ENCODE measurements at regions of chr3 and their contacts with region 1.

Region 1: DNA sequence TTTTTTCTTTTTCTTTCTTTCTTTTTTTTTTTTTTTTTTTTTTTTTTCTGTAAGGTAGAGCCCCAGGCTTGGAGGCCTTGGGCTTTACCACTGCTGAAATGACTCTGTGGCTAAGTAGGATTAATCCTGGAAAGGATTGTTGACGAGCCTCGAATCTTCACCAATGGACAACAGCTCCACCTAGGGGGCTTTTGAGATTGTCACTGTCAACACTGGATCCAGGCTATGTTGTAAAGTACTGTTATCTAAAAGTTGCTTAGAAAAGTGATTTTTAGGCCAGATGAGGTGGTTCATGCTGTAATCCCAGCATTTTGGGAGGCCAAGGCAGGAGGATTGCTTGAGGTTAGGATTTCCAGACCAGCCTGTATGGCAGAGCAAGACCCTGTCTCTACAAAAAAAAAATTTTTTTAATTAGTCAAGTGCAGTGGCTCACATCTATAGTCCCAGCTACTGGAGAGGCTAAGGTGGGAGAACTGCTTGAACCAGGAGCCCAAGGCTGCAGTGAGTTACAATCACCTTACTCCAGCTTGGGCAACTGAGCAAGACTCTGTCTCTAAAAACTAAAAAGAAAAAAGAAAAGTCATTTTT is 41.6 kb downstream of the KLHL18 start:
- DNase-seq: peak; percentile 67
- ATAC-seq: peak; percentile 71
- H3K4me3 ChIP-seq: no peak overlapping the region
- H3K4me3 Mint-ChIP-seq: no peak overlapping the region
- H3K27ac ChIP-seq: peak overlapping the region in 1 of 2 donors; percentile 31
- H3K27ac Mint-ChIP-seq: no peak overlapping the region
- H3K4me1 ChIP-seq: no peaks in the 10 kb centered on the region
- H3K4me1 Mint-ChIP-seq: peaks cover 5% of the 10 kb centered on the region
- H3K27me3 ChIP-seq: no peaks in the 10 kb centered on the region
- H3K27me3 Mint-ChIP-seq: no peaks in the 10 kb centered on the region
- CTCF ChIP-seq: peak; percentile 91

Region 2: DNA sequence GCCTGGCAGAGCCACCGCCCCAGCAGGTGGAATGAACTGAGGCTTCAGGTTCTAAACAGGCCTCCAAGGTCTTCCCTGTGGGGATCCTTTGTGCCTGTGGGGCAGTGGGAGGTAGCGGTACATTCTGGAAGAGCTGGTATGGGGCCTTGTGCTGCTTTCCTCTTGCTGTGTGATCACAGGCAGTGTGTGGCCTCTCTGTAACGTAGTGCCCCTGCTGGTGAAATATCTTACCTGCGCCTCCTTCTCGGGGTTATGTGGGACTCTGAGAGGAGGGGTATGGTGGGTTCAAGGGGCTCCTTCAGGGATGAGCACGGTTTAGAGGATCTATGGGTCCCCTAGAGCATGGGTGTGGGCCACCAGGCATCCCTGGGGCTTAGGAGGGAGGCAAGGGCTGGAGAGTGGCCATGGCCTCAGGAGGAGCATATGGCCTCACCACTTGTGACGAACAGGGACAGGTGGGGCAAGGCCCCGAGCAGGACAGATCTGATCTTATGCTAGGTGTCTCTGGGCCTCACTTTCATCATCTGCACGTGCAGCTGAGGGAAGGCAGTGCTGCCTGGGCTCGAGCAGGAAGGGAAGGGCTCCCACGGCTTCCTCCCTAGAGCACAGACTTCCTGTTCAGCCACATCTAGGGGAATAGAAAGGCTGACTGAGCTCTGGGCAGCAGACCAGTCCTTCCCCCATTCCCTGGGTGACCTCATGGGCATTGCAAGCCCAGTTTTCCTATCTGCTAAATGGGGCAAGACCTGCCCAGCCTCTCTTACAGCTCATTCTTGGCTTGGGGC is 629.0 kb before region 1 on chr3:
- CTCF ChIA-PET with region 1: no interaction called
- POLR2A ChIA-PET with region 1: no interaction called
- intact Hi-C with region 1: no loop called
- DNase-seq: peak; percentile 49
- ATAC-seq: no peak
- H3K4me3 ChIP-seq: no peak overlapping the region
- H3K4me3 Mint-ChIP-seq: peak overlapping the region; percentile 56
- H3K27ac ChIP-seq: no peak overlapping the region
- H3K27ac Mint-ChIP-seq: peak overlapping the region; percentile 7
- H3K4me1 ChIP-seq: peaks cover 33 to 38% of the 10 kb centered on the region in 2 donors
- H3K4me1 Mint-ChIP-seq: peaks cover 28% of the 10 kb centered on the region
- H3K27me3 ChIP-seq: peaks cover 0 to 35% (median 8%) of the 10 kb centered on the region in 4 experiments
- H3K27me3 Mint-ChIP-seq: peaks cover 9% of the 10 kb centered on the region
- CTCF ChIP-seq: peak; percentile 43

Region 3: DNA sequence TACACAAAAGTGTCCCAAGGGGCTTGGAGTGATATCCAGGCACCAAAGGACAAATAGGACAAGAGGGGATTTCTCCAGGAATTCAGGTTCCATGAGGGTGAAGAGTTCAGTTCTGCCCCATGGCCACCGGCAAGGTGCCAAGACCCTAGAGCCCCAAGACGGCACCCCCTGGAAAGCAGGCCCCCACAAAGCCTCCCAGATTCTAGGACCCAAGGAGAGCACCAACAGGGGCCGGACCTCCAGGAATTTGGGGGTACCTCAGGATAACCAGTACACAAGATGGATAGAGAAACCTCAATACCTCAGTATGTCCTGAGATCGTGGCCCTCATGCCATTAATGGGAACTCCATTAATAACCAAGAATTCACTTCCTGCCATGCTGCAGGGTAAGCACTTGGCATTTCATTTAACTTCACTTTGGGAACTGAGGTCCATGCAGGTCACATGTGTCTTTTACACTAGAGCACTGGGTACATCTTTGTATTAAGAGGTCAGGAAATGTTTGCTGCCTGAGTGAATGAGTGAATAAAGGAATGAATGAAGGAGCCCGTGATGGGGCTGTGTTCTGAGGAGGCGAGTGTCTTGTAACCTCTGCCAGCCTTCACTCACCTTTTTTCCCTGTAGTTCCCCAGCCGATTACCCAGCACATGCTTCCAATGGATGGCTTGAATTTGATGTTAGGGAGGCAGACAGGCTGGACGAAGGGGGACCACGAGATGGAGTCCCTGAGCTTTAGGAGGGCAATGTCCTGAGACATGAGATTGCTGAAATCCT is 591.2 kb before region 1 on chr3:
- CTCF ChIA-PET with region 1: no interaction called
- POLR2A ChIA-PET with region 1: no interaction called
- intact Hi-C with region 1: no loop called
- DNase-seq: no peak
- ATAC-seq: no peak
- H3K4me3 ChIP-seq: no peak overlapping the region
- H3K4me3 Mint-ChIP-seq: no peak overlapping the region
- H3K27ac ChIP-seq: no peak overlapping the region
- H3K27ac Mint-ChIP-seq: no peak overlapping the region
- H3K4me1 ChIP-seq: no peaks in the 10 kb centered on the region
- H3K4me1 Mint-ChIP-seq: no peaks in the 10 kb centered on the region
- H3K27me3 ChIP-seq: peaks cover 0 to 3% (median 2%) of the 10 kb centered on the region in 4 experiments
- H3K27me3 Mint-ChIP-seq: peaks cover 16% of the 10 kb centered on the region
- CTCF ChIP-seq: no peak

Region 4: GRCh38 chr3:46923559-46924350 is 400.6 kb before region 1 on chr3:
- CTCF ChIA-PET with region 1: interaction called, 13 read pairs
- POLR2A ChIA-PET with region 1: no interaction called
- intact Hi-C with region 1: loop called (anchors 10 kb)
- DNase-seq: peak; percentile 66
- ATAC-seq: no peak
- H3K4me3 ChIP-seq: no peak overlapping the region
- H3K4me3 Mint-ChIP-seq: peak overlapping the region; percentile 21
- H3K27ac ChIP-seq: peak overlapping the region; percentile 85 to 92
- H3K27ac Mint-ChIP-seq: peak overlapping the region; percentile 83
- H3K4me1 ChIP-seq: peaks cover 57 to 59% of the 10 kb centered on the region in 2 donors
- H3K4me1 Mint-ChIP-seq: peaks cover 60% of the 10 kb centered on the region
- H3K27me3 ChIP-seq: no peaks in the 10 kb centered on the region
- H3K27me3 Mint-ChIP-seq: no peaks in the 10 kb centered on the region
- CTCF ChIP-seq: peak; percentile 70

Region 5: DNA sequence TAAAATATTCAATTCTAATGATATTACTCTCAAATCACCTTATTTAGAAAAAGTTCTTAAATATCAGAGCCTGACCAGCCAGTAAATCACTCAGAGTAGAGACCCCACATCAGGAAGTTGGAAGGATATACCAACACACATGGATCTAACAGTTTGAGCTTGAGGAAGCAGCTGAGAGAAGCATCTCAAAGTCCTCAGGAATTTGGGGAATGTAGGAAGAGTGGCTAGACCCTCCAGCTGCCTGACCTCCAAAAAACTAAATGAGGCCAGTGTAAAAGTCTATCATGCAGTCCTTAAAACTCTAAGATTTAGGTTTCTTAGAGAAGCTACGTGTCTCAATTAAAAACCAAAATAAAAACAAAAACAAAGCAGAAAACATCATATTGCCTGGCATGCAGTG is 215.8 kb before region 1 on chr3:
- CTCF ChIA-PET with region 1: interaction called, 3 read pairs
- POLR2A ChIA-PET with region 1: interaction called, 3 read pairs
- intact Hi-C with region 1: loop called (anchors 5 kb)
- DNase-seq: no peak
- ATAC-seq: no peak
- H3K4me3 ChIP-seq: no peak overlapping the region
- H3K4me3 Mint-ChIP-seq: no peak overlapping the region
- H3K27ac ChIP-seq: peak overlapping the region in 1 of 2 donors; percentile 39
- H3K27ac Mint-ChIP-seq: no peak overlapping the region
- H3K4me1 ChIP-seq: peaks cover 2 to 3% of the 10 kb centered on the region in 2 donors
- H3K4me1 Mint-ChIP-seq: peaks cover 1% of the 10 kb centered on the region
- H3K27me3 ChIP-seq: no peaks in the 10 kb centered on the region
- H3K27me3 Mint-ChIP-seq: no peaks in the 10 kb centered on the region
- CTCF ChIP-seq: no peak

Region 6: GRCh38 chr3:47193871-47194859 is 130.2 kb before region 1 on chr3:
- CTCF ChIA-PET with region 1: no interaction called
- POLR2A ChIA-PET with region 1: no interaction called
- intact Hi-C with region 1: no loop called
- DNase-seq: no peak
- ATAC-seq: no peak
- H3K4me3 ChIP-seq: no peak overlapping the region
- H3K4me3 Mint-ChIP-seq: no peak overlapping the region
- H3K27ac ChIP-seq: no peak overlapping the region
- H3K27ac Mint-ChIP-seq: no peak overlapping the region
- H3K4me1 ChIP-seq: no peaks in the 10 kb centered on the region
- H3K4me1 Mint-ChIP-seq: no peaks in the 10 kb centered on the region
- H3K27me3 ChIP-seq: no peaks in the 10 kb centered on the region
- H3K27me3 Mint-ChIP-seq: no peaks in the 10 kb centered on the region
- CTCF ChIP-seq: no peak

Region 7: GRCh38 chr3:47282424-47283192 is 41.8 kb before region 1 on chr3 and contains the starts of genes KIF9 and KLHL18:
- CTCF ChIA-PET with region 1: interaction called, 11 read pairs
- POLR2A ChIA-PET with region 1: no interaction called
- intact Hi-C with region 1: loop called (anchors 2 kb)
- DNase-seq: peak; percentile 100
- ATAC-seq: peak; percentile 85
- H3K4me3 ChIP-seq: peak within 1 kb of the TSS; percentile 74 to 98 (median 89)
- H3K4me3 Mint-ChIP-seq: peak within 1 kb of the TSS; percentile 99
- H3K27ac ChIP-seq: peak within 1 kb of the TSS; percentile 99
- H3K27ac Mint-ChIP-seq: peak within 1 kb of the TSS; percentile 100
- H3K4me1 ChIP-seq: peaks cover 33 to 49% of the 10 kb centered on the region in 2 donors
- H3K4me1 Mint-ChIP-seq: peaks cover 45% of the 10 kb centered on the region
- H3K27me3 ChIP-seq: no peaks in the 10 kb centered on the region
- H3K27me3 Mint-ChIP-seq: no peaks in the 10 kb centered on the region
- CTCF ChIP-seq: no peak
- total RNA-seq, gene KIF9: 1.3 and 3.0 TPM in 2 replicates
- total RNA-seq, gene KLHL18: 30.9 and 33.0 TPM in 2 replicates

Region 8: GRCh38 chr3:47313341-47314055 is 10.9 kb before region 1 on chr3:
- CTCF ChIA-PET with region 1: interaction called, 13 read pairs
- POLR2A ChIA-PET with region 1: interaction called, 3 read pairs
- intact Hi-C with region 1: no loop called
- DNase-seq: no peak
- ATAC-seq: no peak
- H3K4me3 ChIP-seq: no peak overlapping the region
- H3K4me3 Mint-ChIP-seq: no peak overlapping the region
- H3K27ac ChIP-seq: no peak overlapping the region
- H3K27ac Mint-ChIP-seq: no peak overlapping the region
- H3K4me1 ChIP-seq: peaks cover 0 to 3% of the 10 kb centered on the region in 2 donors
- H3K4me1 Mint-ChIP-seq: peaks cover 21% of the 10 kb centered on the region
- H3K27me3 ChIP-seq: no peaks in the 10 kb centered on the region
- H3K27me3 Mint-ChIP-seq: no peaks in the 10 kb centered on the region
- CTCF ChIP-seq: no peak